ENCODE measurements at regions of chr3 and their contacts with region 1.

Region 1: DNA sequence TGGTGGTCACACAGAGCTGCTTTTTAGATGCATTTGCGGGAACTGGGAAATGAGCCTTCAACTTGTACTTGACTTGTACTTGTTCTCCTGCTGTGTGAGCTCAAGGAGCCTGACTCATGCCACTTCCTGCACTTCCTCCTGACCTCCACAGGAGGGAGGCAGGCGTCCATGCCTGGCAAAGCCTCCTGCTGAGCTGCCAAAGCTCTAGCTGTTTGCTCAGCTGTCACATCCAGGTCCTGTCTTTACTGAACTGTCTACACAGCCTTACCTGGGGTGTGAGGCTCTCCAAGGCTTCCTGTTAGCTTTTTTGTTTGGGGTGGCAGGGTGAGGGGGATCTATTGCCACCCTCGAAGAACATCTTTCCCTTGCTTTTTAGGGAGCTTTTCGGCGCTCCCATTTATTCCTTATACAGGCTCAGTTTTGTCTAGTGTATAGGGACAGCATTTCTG is 6.4 kb downstream of the THPO start:
- DNase-seq: peak; percentile 77 to 79
- H3K4me3 ChIP-seq: no peak overlapping the region
- H3K27ac ChIP-seq: no peak overlapping the region
- H3K4me1 ChIP-seq: peaks cover 3 to 8% (median 6%) of the 10 kb centered on the region in 4 experiments; a peak in 6 of 7 replicates
- H3K27me3 ChIP-seq: no peaks in the 10 kb centered on the region; a peak in 1 of 7 replicates
- CTCF ChIP-seq: peak; percentile 91 to 97 (median 96)
- EP300 ChIP-seq: no peak
- POLR2A ChIP-seq: no peak
- RAD21 ChIP-seq: peak; percentile 99

Region 2: GRCh38 chr3:184234224-184234623 is 137.4 kb before region 1 on chr3:
- CTCF ChIA-PET with region 1: no interaction called
- POLR2A ChIA-PET with region 1: no interaction called
- DNase-seq: no peak
- H3K4me3 ChIP-seq: no peak overlapping the region
- H3K27ac ChIP-seq: no peak overlapping the region
- H3K4me1 ChIP-seq: peaks cover 0 to 14% (median 2%) of the 10 kb centered on the region in 4 experiments; a peak in 3 of 7 replicates
- H3K27me3 ChIP-seq: peaks cover 27 to 44% (median 38%) of the 10 kb centered on the region in 4 experiments
- CTCF ChIP-seq: no peak
- EP300 ChIP-seq: no peak
- POLR2A ChIP-seq: no peak
- RAD21 ChIP-seq: no peak

Region 3: GRCh38 chr3:184335661-184336546 is 35.7 kb before region 1 on chr3:
- CTCF ChIA-PET with region 1: interaction called, 14 read pairs
- POLR2A ChIA-PET with region 1: interaction called, 12 read pairs
- DNase-seq: peak; percentile 64 to 99
- H3K4me3 ChIP-seq: peak overlapping the region; percentile 76 to 83 (median 80)
- H3K27ac ChIP-seq: peak overlapping the region; percentile 82
- H3K4me1 ChIP-seq: peaks cover 5 to 27% (median 18%) of the 10 kb centered on the region in 4 experiments
- H3K27me3 ChIP-seq: no peaks in the 10 kb centered on the region
- CTCF ChIP-seq: peak in 1 of 3 experiments; percentile 28; a peak in 1 of 4 replicates
- EP300 ChIP-seq: peak; percentile 26 to 30; a peak in 2 of 3 replicates
- POLR2A ChIP-seq: peak in 1 of 2 experiments; percentile 84; a peak in 2 of 3 replicates
- RAD21 ChIP-seq: peak; percentile 9 to 23; a peak in 2 of 4 replicates

Region 4: GRCh38 chr3:184391266-184391665 is 19.7 kb after region 1 on chr3:
- CTCF ChIA-PET with region 1: interaction called, 78 read pairs
- POLR2A ChIA-PET with region 1: interaction called, 3 read pairs
- DNase-seq: no peak
- H3K4me3 ChIP-seq: no peak overlapping the region
- H3K27ac ChIP-seq: no peak overlapping the region
- H3K4me1 ChIP-seq: peaks cover 0 to 3% (median 0%) of the 10 kb centered on the region in 4 experiments; a peak in 2 of 7 replicates
- H3K27me3 ChIP-seq: no peaks in the 10 kb centered on the region; a peak in 3 of 7 replicates
- CTCF ChIP-seq: no peak
- EP300 ChIP-seq: no peak
- POLR2A ChIP-seq: no peak
- RAD21 ChIP-seq: no peak

Region 5: DNA sequence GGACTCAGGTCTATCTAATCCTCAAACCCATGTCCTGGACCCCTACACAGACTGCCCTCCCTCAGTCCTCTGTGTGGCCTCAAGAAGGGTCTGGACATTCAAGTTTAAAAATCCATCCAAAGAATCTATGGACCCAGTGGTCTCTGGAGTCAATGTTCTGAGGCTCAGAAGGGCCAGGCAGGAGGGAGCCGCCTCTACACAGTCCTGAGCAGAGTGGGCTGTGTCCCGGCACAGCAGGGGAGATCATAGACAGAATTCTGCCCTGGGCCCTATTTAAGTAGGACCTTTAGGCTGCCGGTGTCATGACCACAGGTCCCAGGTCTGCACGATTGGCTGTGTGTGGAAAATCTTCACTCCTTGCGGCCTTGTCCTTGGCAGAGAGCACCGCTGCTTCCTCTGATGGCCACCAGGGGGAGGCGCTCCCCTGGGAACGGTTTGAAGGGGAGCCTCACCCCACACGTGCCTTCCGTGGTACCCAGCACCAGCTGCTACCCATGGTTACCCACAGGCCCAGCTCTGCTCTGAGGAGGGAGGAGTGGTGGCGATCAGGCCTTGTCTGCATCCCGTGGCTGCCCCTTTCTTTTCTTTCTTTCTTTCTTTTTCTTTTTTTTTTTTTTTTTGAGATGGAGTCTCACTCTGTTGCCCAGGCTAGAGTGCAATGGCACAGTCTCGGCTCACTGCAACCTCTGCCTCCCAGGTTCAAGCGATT is 46.2 kb after region 1 on chr3:
- CTCF ChIA-PET with region 1: interaction called, 15 read pairs
- POLR2A ChIA-PET with region 1: interaction called, 3 read pairs
- DNase-seq: peak; percentile 19 to 84
- H3K4me3 ChIP-seq: no peak overlapping the region
- H3K27ac ChIP-seq: no peak overlapping the region
- H3K4me1 ChIP-seq: peaks cover 0 to 5% (median 4%) of the 10 kb centered on the region in 4 experiments; a peak in 2 of 7 replicates
- H3K27me3 ChIP-seq: no peaks in the 10 kb centered on the region
- CTCF ChIP-seq: peak; percentile 93 to 97 (median 96)
- EP300 ChIP-seq: no peak
- POLR2A ChIP-seq: no peak
- RAD21 ChIP-seq: peak; percentile 89 to 90

Region 6: GRCh38 chr3:184459355-184459754 is 87.8 kb after region 1 on chr3:
- CTCF ChIA-PET with region 1: interaction called, 14 read pairs
- POLR2A ChIA-PET with region 1: no interaction called
- DNase-seq: no peak
- H3K4me3 ChIP-seq: no peak overlapping the region
- H3K27ac ChIP-seq: no peak overlapping the region
- H3K4me1 ChIP-seq: no peaks in the 10 kb centered on the region
- H3K27me3 ChIP-seq: no peaks in the 10 kb centered on the region
- CTCF ChIP-seq: no peak
- EP300 ChIP-seq: no peak
- POLR2A ChIP-seq: no peak
- RAD21 ChIP-seq: no peak

Region 7: GRCh38 chr3:184505076-184505878 is 133.7 kb after region 1 on chr3:
- CTCF ChIA-PET with region 1: interaction called, 16 read pairs
- POLR2A ChIA-PET with region 1: no interaction called
- DNase-seq: no peak
- H3K4me3 ChIP-seq: no peak overlapping the region
- H3K27ac ChIP-seq: no peak overlapping the region
- H3K4me1 ChIP-seq: peaks cover 2 to 5% (median 2%) of the 10 kb centered on the region in 4 experiments; a peak in 6 of 7 replicates
- H3K27me3 ChIP-seq: no peaks in the 10 kb centered on the region; a peak in 2 of 7 replicates
- CTCF ChIP-seq: no peak
- EP300 ChIP-seq: no peak
- POLR2A ChIP-seq: no peak
- RAD21 ChIP-seq: no peak

Region 8: GRCh38 chr3:184523825-184524615 is 152.4 kb after region 1 on chr3:
- CTCF ChIA-PET with region 1: interaction called, 20 read pairs
- POLR2A ChIA-PET with region 1: interaction called, 6 read pairs
- DNase-seq: no peak
- H3K4me3 ChIP-seq: no peak overlapping the region; a peak in 1 of 8 replicates
- H3K27ac ChIP-seq: no peak overlapping the region
- H3K4me1 ChIP-seq: peaks cover 0 to 14% (median 9%) of the 10 kb centered on the region in 4 experiments
- H3K27me3 ChIP-seq: no peaks in the 10 kb centered on the region
- CTCF ChIP-seq: no peak
- EP300 ChIP-seq: no peak
- POLR2A ChIP-seq: peak in 1 of 2 experiments; percentile 33; a peak in 1 of 3 replicates
- RAD21 ChIP-seq: no peak